ENCODE measurements at regions of chr16 and their contacts with region 1.

Region 1: GRCh38 chr16:1782352-1783091 is at the starts of genes NUBP2 and SPSB3:
- DNase-seq: peak; percentile 87 to 99 (median 94)
- ATAC-seq: peak; percentile 87 to 88 (median 87)
- H3K4me3 ChIP-seq: peak within 1 kb of the TSS; percentile 72 to 73
- H3K4me3 Mint-ChIP-seq: peak within 1 kb of the TSS; percentile 75 to 91 (median 89)
- H3K27ac ChIP-seq: peak within 1 kb of the TSS; percentile 57
- H3K27ac Mint-ChIP-seq: peak within 1 kb of the TSS; percentile 86 to 88
- H3K4me1 ChIP-seq: peaks cover 2 to 70% of the 10 kb centered on the region in 2 experiments
- H3K4me1 Mint-ChIP-seq: peaks cover 10 to 44% (median 34%) of the 10 kb centered on the region in 3 donors
- H3K27me3 ChIP-seq: no peaks in the 10 kb centered on the region
- H3K27me3 Mint-ChIP-seq: no peaks in the 10 kb centered on the region
- total RNA-seq, gene NUBP2: 41.2 to 77.0 (median 74.3) TPM
- total RNA-seq, gene SPSB3: 67.3 to 162 (median 139) TPM

Region 2: GRCh38 chr16:1763521-1764511 is 18.7 kb before region 1 on chr16:
- CTCF ChIA-PET with region 1: no interaction called
- POLR2A ChIA-PET with region 1: no interaction called
- DNase-seq: no peak
- ATAC-seq: no peak
- H3K4me3 ChIP-seq: no peak overlapping the region
- H3K4me3 Mint-ChIP-seq: no peak overlapping the region
- H3K27ac ChIP-seq: no peak overlapping the region
- H3K27ac Mint-ChIP-seq: no peak overlapping the region
- H3K4me1 ChIP-seq: no peaks in the 10 kb centered on the region
- H3K4me1 Mint-ChIP-seq: no peaks in the 10 kb centered on the region
- H3K27me3 ChIP-seq: no peaks in the 10 kb centered on the region
- H3K27me3 Mint-ChIP-seq: no peaks in the 10 kb centered on the region

Region 3: DNA sequence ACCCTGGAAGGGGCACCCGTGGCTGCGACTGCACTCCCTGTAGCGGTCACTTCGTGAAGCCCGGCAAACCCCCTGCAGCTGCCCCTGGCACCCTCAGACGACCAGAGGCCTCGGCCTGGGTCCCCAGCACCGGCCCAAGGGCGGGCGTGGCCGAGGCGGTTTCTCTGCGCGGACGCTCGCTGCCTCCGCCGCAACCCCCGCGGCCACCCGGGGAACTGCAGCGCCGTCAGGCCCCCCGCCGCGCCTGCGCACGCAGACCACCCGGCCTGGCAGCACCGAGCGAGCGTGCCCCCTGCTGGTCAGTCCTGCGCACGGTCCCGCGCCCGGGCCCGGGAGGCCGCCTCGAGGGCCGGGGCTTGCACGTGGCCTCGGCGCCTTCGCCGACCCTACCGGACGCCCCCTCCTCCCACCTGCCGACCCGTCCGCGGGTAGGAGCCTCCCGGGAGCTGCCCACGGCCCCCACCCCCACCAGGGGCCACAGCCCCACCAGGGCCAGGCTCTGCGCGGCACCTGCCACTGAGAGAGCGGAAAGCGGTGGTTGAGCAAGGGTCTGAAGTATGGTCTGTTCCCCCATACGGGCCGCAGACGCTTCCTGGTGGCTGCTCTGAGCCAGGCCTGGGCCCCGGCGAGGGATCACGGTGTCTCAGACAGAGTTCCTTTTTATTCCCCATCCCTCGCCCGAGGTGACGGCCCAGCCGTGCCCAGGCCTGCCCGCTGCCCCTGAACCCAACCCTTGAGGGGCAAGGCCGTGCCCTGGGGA is 147.2 kb after region 1 on chr16:
- CTCF ChIA-PET with region 1: interaction called in 1 of 2 experiments, 12 read pairs
- POLR2A ChIA-PET with region 1: no interaction called
- DNase-seq: peak; percentile 70 to 95 (median 89)
- ATAC-seq: peak; percentile 94 to 100 (median 95)
- H3K4me3 ChIP-seq: peak overlapping the region in 1 of 2 donors; percentile 43
- H3K4me3 Mint-ChIP-seq: peak overlapping the region; percentile 56 to 78 (median 59)
- H3K27ac ChIP-seq: no peak overlapping the region
- H3K27ac Mint-ChIP-seq: no peak overlapping the region
- H3K4me1 ChIP-seq: peaks cover 2 to 11% of the 10 kb centered on the region in 2 experiments
- H3K4me1 Mint-ChIP-seq: peaks cover 0 to 3% (median 1%) of the 10 kb centered on the region in 3 donors
- H3K27me3 ChIP-seq: peaks cover 0 to 18% of the 10 kb centered on the region in 2 experiments
- H3K27me3 Mint-ChIP-seq: peaks cover 0 to 2% of the 10 kb centered on the region in 2 donors

Measured in T-cell (primary cell).